IMR-90 (cell line): ENCODE measurements at regions of chr3 and their contacts with region 1.

Region 1: GRCh38 chr3:47522082-47522987 is 8.8 kb upstream of the ELP6 start:
- DNase-seq: peak; percentile 91
- ATAC-seq: peak; percentile 99
- H3K4me3 ChIP-seq: no peak overlapping the region
- H3K27ac ChIP-seq: no peak overlapping the region
- H3K4me1 ChIP-seq: no peaks in the 10 kb centered on the region
- H3K27me3 ChIP-seq: no peaks in the 10 kb centered on the region
- CTCF ChIP-seq: peak; percentile 94
- POLR2A ChIP-seq: peak; percentile 60; the same call in 1 of the 2 replicates
- RAD21 ChIP-seq: peak; percentile 98

Region 2: DNA sequence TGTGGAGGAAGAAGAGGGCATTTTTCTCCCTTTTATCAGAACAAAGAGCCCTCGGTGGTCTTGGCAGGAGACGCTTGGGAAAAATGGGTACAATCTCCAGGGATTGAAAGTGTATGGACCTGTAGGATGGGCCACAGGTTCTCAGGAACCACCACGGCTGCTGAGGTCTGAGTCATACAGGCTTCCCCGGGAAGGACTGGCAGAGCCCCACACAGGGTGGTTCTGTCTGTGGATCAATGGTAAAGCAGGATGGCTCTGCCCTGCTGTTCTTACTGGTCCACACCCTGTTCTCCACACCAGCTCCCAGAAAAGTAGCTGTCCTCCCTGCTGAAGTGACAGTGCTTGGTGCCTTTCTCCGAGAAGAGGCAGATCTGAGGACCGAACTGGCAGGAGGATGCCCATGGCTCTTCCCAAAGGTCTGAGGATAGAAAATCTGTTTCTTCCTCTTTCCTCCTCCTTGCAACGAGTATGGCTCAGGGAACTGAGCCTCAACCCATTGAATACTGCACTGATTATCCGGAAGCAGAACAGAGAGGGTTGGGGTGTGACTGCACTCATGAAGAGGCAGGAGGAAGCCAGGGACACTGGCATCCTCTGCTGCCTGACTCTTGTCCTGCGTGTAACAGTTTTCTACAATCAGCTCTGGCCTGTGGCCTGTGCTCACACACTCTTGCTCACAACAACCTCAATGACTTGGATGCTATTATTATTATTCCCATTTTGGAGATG is 278.8 kb before region 1 on chr3:
- CTCF ChIA-PET with region 1: no interaction called
- POLR2A ChIA-PET with region 1: no interaction called
- dilution Hi-C with region 1: no loop called
- in situ Hi-C with region 1: no loop called
- intact Hi-C with region 1: no loop called
- DNase-seq: no peak
- ATAC-seq: no peak
- H3K4me3 ChIP-seq: no peak overlapping the region
- H3K27ac ChIP-seq: no peak overlapping the region
- H3K4me1 ChIP-seq: no peaks in the 10 kb centered on the region
- H3K27me3 ChIP-seq: no peaks in the 10 kb centered on the region
- CTCF ChIP-seq: no peak
- POLR2A ChIP-seq: no peak
- RAD21 ChIP-seq: no peak

Region 3: DNA sequence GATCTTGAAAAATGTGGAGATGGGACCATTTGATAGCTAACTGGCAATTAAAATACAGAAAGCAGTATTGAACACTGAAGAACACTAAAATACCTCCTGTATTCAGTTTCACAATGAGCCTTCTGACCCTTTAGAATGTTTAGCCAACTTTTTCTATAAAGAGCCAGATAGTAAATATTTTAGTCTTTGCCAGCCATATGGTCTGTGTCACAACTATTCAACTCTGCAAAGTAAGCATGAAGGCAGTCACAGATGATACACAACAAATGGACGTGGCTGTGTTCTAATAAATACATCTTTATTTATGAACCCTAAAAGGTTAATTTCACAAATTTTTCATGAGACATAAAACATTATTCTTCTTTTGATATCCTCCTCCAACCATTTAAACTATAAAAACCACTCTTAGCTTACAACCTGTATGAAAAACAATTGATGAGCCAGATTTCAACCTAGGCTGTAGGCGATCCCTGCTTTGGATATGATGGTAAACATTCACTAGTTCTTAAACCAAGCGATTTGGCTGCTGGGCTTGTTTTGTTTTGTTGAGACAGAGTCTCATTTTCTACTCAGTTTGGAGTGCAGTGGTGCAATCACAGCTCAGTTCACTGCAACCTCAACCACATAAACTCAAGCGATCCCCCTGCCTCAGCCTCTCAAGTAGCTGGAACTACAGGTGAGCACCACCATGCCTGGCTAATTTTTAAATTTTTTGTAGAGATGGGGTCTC is 69.9 kb after region 1 on chr3:
- CTCF ChIA-PET with region 1: no interaction called
- POLR2A ChIA-PET with region 1: no interaction called
- dilution Hi-C with region 1: no loop called
- in situ Hi-C with region 1: no loop called
- intact Hi-C with region 1: loop called (anchors 1 kb)
- DNase-seq: no peak
- ATAC-seq: peak; percentile 40; the same call in 1 of the 2 replicates
- H3K4me3 ChIP-seq: no peak overlapping the region
- H3K27ac ChIP-seq: peak overlapping the region; percentile 37; the same call in 1 of the 2 replicates
- H3K4me1 ChIP-seq: no peaks in the 10 kb centered on the region; the same call in 1 of the 2 replicates
- H3K27me3 ChIP-seq: no peaks in the 10 kb centered on the region
- CTCF ChIP-seq: no peak
- POLR2A ChIP-seq: no peak
- RAD21 ChIP-seq: no peak

Region 4: DNA sequence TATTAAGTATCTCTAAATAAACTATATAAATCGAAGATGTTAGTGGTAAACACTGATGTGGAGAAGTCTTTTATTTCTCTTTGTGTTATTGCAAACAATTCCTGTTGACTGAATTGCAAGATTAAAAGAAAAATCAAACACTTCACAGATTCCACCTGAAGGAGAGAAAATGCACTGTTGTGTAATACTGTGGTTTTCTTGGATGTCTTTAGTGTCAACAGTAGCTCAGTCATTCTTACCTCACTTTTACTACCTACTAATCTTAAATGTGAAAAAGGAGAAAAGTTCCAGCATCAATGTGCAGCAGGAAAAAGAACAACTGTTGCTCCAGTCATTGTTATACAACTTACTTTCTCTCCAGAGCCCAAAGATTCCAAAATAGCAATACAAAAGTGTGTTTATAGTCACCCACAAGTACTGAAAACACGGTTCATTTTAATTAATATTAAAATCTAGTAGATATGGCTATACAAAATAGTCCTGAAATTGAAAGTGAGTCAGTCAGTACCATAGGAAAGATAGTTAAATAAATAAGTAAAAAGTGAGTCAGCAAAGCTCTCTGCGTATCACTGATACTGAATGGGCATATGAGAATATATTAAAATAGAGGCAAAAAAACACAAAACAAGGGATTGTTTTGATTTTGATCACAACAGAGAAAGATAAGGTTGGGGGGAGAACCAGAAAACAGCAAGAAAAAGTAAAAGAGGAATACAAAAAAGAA is 146.9 kb after region 1 on chr3:
- CTCF ChIA-PET with region 1: no interaction called
- POLR2A ChIA-PET with region 1: no interaction called
- dilution Hi-C with region 1: no loop called
- in situ Hi-C with region 1: no loop called
- intact Hi-C with region 1: loop called (anchors 5 kb)
- DNase-seq: peak; percentile 66
- ATAC-seq: peak; percentile 99
- H3K4me3 ChIP-seq: no peak overlapping the region
- H3K27ac ChIP-seq: no peak overlapping the region
- H3K4me1 ChIP-seq: peaks cover 4% of the 10 kb centered on the region; the same call in 1 of the 2 replicates
- H3K27me3 ChIP-seq: no peaks in the 10 kb centered on the region
- CTCF ChIP-seq: no peak
- POLR2A ChIP-seq: no peak
- RAD21 ChIP-seq: no peak

Region 5: GRCh38 chr3:47781685-47782445 is 259.5 kb after region 1 on chr3 and contains the start of gene SMARCC1:
- CTCF ChIA-PET with region 1: interaction called, 10 read pairs
- POLR2A ChIA-PET with region 1: no interaction called
- dilution Hi-C with region 1: no loop called
- in situ Hi-C with region 1: loop called (anchors 5 kb)
- intact Hi-C with region 1: no loop called
- DNase-seq: peak; percentile 97
- ATAC-seq: peak; percentile 93
- H3K4me3 ChIP-seq: peak within 1 kb of the TSS; percentile 61
- H3K27ac ChIP-seq: peak within 1 kb of the TSS; percentile 92
- H3K4me1 ChIP-seq: peaks cover 2% of the 10 kb centered on the region
- H3K27me3 ChIP-seq: no peaks in the 10 kb centered on the region
- CTCF ChIP-seq: no peak
- POLR2A ChIP-seq: peak; percentile 87
- RAD21 ChIP-seq: no peak
- total RNA-seq, gene SMARCC1: 39.6 and 51.4 TPM in 2 replicates

Region 6: GRCh38 chr3:47791193-47791855 is 269.0 kb after region 1 on chr3:
- CTCF ChIA-PET with region 1: interaction called, 5 read pairs
- POLR2A ChIA-PET with region 1: no interaction called
- dilution Hi-C with region 1: no loop called
- in situ Hi-C with region 1: loop called (anchors 5 kb)
- intact Hi-C with region 1: loop called (anchors 1 kb)
- DNase-seq: no peak
- ATAC-seq: no peak
- H3K4me3 ChIP-seq: no peak overlapping the region
- H3K27ac ChIP-seq: no peak overlapping the region
- H3K4me1 ChIP-seq: no peaks in the 10 kb centered on the region
- H3K27me3 ChIP-seq: no peaks in the 10 kb centered on the region
- CTCF ChIP-seq: no peak
- POLR2A ChIP-seq: no peak
- RAD21 ChIP-seq: no peak